Natural killer cell (primary cell): ENCODE measurements at regions of chr15 and their contacts with region 1.

Region 1: GRCh38 chr15:28123408-28124023 is 24.4 kb upstream of the OCA2 start:
- DNase-seq: peak; percentile 50 to 56
- ATAC-seq: peak; percentile 80 to 95 (median 94)
- H3K4me3 ChIP-seq: no peak overlapping the region
- H3K4me3 Mint-ChIP-seq: no peak overlapping the region
- H3K27ac ChIP-seq: no peak overlapping the region
- H3K27ac Mint-ChIP-seq: peak overlapping the region in 1 of 2 donors; percentile 62
- H3K4me1 ChIP-seq: no peaks in the 10 kb centered on the region
- H3K4me1 Mint-ChIP-seq: peaks cover 10 to 14% of the 10 kb centered on the region in 2 donors
- H3K27me3 ChIP-seq: no peaks in the 10 kb centered on the region
- H3K27me3 Mint-ChIP-seq: no peaks in the 10 kb centered on the region
- CTCF ChIP-seq: peak; percentile 45

Region 2: DNA sequence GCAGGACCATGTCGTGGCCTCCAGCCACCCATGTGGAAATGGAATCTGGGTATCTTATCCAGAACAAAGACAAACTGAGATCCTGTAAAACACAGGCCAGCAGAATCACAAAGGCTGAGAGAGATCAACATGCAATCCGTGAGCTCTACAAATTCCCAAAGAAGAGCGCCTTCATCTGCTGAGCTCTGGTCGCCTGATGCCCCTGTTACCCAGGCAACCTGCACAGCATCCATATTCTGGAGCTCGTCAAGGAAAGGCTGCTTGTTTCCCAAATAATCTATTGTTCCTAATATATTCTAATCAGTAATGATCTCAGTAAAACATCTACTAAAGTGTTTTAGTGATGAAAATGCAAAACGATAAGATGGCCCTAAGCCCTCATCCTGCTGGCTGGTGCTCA is 158.0 kb before region 1 on chr15:
- intact Hi-C with region 1: no loop called
- DNase-seq: no peak
- ATAC-seq: no peak
- H3K4me3 ChIP-seq: no peak overlapping the region
- H3K4me3 Mint-ChIP-seq: no peak overlapping the region
- H3K27ac ChIP-seq: no peak overlapping the region
- H3K27ac Mint-ChIP-seq: no peak overlapping the region
- H3K4me1 ChIP-seq: no peaks in the 10 kb centered on the region
- H3K4me1 Mint-ChIP-seq: no peaks in the 10 kb centered on the region
- H3K27me3 ChIP-seq: no peaks in the 10 kb centered on the region
- H3K27me3 Mint-ChIP-seq: peaks cover 0 to 4% of the 10 kb centered on the region in 2 donors
- CTCF ChIP-seq: no peak

Region 3: DNA sequence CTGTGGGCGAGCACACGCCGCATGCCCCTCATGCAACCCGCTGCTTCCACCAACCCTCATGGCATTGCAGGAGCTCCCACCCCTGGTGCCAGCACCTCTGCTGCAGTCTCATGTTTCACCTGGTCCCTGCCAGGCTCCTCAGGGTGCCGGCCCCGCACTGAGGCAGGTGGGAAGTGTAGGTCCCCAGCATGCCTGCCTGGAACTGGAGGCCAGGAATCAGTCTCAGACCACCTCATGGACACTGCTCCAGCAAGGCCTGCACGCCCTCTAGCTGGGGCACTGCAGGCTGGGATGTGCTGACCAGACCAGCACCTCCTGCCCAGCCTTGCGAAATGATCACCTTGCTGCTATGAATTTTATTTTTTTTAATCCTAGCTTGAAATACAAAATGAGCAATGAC is 63.5 kb before region 1 on chr15:
- intact Hi-C with region 1: no loop called
- DNase-seq: no peak
- ATAC-seq: peak in 1 of 3 donors; percentile 6
- H3K4me3 ChIP-seq: no peak overlapping the region
- H3K4me3 Mint-ChIP-seq: no peak overlapping the region
- H3K27ac ChIP-seq: no peak overlapping the region
- H3K27ac Mint-ChIP-seq: no peak overlapping the region
- H3K4me1 ChIP-seq: no peaks in the 10 kb centered on the region
- H3K4me1 Mint-ChIP-seq: no peaks in the 10 kb centered on the region
- H3K27me3 ChIP-seq: no peaks in the 10 kb centered on the region
- H3K27me3 Mint-ChIP-seq: peaks cover 6 to 9% of the 10 kb centered on the region in 2 donors
- CTCF ChIP-seq: no peak

Region 4: DNA sequence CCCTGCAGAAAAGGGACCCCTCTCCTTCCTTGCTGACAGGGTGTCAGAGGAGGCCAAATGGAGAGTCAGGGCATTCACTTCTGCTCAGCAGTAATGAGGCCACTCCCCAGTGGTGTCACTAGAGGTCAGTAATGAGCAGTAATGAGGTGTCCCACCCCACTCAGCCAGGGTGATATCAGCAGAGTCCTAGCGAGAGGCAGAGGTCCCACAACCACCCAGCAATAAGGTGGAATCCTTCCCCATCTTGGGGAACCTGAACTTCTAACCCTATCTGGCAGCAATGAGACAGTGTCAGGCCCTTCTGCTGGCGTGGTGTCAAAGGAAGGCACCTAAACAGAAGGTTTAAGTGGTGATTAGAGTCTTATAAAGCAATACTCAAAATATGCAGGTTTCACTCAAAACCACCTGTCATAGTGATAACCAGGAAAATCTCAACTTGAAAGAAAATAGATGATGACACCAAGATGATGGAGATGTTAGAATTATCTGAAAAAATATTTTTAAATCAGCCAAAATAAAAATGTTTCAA is 37.3 kb before region 1 on chr15:
- intact Hi-C with region 1: loop called (anchors 1 kb)
- DNase-seq: peak; percentile 39 to 75
- ATAC-seq: peak; percentile 94 to 100 (median 100)
- H3K4me3 ChIP-seq: no peak overlapping the region
- H3K4me3 Mint-ChIP-seq: no peak overlapping the region
- H3K27ac ChIP-seq: no peak overlapping the region
- H3K27ac Mint-ChIP-seq: peak overlapping the region; percentile 7 to 29
- H3K4me1 ChIP-seq: no peaks in the 10 kb centered on the region
- H3K4me1 Mint-ChIP-seq: peaks cover 11 to 12% of the 10 kb centered on the region in 2 donors
- H3K27me3 ChIP-seq: no peaks in the 10 kb centered on the region
- H3K27me3 Mint-ChIP-seq: peaks cover 22 to 29% of the 10 kb centered on the region in 2 donors
- CTCF ChIP-seq: peak; percentile 74